Panc1 (cell line): ENCODE measurements at regions of chr4 and their contacts with region 1.

Region 1: GRCh38 chr4:45539142-45539814 is 584.6 kb downstream of the GABRG1 start:
- DNase-seq: no peak
- ATAC-seq: no peak
- H3K4me3 ChIP-seq: no peak overlapping the region
- H3K27ac ChIP-seq: no peak overlapping the region
- H3K4me1 ChIP-seq: no peaks in the 10 kb centered on the region
- H3K27me3 ChIP-seq: no peaks in the 10 kb centered on the region
- CTCF ChIP-seq: no peak

Region 2: GRCh38 chr4:45576275-45576674 is 37.0 kb after region 1 on chr4:
- CTCF ChIA-PET with region 1: no interaction called
- POLR2A ChIA-PET with region 1: no interaction called
- in situ Hi-C with region 1: no loop called
- intact Hi-C with region 1: loop called (anchors 2 kb)
- DNase-seq: no peak
- ATAC-seq: no peak
- H3K4me3 ChIP-seq: no peak overlapping the region
- H3K27ac ChIP-seq: no peak overlapping the region
- H3K4me1 ChIP-seq: no peaks in the 10 kb centered on the region
- H3K27me3 ChIP-seq: no peaks in the 10 kb centered on the region
- CTCF ChIP-seq: no peak

Region 3: GRCh38 chr4:45646885-45647590 is 107.8 kb after region 1 on chr4:
- CTCF ChIA-PET with region 1: no interaction called
- POLR2A ChIA-PET with region 1: no interaction called
- in situ Hi-C with region 1: no loop called
- intact Hi-C with region 1: no loop called
- DNase-seq: no peak
- ATAC-seq: no peak
- H3K4me3 ChIP-seq: no peak overlapping the region
- H3K27ac ChIP-seq: no peak overlapping the region
- H3K4me1 ChIP-seq: no peaks in the 10 kb centered on the region
- H3K27me3 ChIP-seq: no peaks in the 10 kb centered on the region
- CTCF ChIP-seq: no peak